ENCODE measurements at regions of chr19 and their contacts with region 1.

Region 1: GRCh38 chr19:41859618-41860418 is at the start of gene RPS19:
- DNase-seq: peak; percentile 99
- total RNA-seq, gene RPS19: 548 TPM

Region 2: DNA sequence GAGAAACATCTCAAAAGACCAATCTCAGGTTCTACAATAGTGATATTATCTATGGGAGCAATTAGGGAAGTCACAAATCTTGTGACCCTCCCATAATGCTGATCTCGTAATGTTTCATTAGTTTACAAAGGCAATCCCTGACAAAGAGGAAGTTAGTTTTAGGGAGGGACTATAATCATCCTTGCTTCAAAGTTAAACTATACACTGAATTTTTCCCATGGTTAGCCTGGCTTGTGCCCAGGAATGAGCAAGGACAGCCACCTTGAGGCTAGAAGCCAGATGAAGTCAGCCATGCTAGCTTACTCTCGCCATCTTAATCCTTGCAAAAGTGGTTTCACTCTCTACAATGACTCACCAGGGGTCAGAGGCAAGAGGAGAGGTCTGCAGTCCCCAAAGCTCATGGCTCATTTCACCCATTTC is 58.0 kb before region 1 on chr19:
- intact Hi-C with region 1: no loop called
- DNase-seq: no peak

Region 3: GRCh38 chr19:41883821-41884733 is 24.3 kb after region 1 on chr19:
- intact Hi-C with region 1: loop called (anchors 2 kb)
- DNase-seq: peak; percentile 96

Region 4: DNA sequence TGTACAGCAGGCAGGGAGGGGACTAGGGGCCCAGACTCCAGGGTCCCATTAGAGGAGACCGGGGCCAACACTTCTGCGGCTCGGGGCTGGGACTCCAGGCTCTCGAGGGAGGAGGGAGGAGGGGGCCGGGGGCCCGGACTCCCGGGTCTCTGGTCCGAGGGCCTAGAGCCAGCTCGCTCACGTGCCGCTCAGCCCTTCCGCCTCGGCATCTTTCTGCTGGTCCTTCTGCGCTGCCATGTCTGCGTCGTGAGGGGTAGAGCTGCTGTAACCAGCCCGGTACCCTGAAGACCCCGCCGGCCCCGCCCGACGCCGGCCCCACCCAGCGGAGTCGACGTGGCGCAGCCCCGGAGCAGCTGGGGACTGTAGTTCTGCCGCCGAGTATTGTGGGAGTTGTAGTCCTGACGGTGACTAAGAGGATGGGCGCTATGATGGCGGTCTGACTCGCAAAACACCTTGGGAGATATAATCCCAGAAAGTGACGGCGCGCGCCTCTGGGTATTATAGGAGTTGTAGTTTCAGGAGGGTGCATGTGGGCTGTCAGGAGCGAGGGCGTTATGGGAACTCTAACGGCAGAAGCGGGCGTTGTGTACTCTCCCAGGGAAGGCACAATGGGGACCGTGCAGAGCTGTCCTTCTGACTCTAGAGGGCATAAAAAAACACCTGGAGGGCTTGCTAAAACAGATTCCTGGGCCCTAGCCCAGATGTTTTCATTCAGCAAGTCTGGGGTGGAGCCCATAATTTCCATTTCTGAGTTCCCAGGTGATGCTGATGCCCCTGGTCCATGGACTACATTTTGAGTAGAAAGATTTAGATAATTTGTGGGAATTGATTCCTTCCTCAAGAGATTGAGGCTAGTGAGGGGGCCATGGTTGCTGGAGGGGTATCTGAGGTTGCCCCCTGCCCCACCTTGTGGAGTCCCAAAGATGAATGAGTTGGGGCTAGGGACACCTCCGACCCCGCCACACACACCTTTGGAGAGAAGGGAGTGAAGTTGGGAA is 99.5 kb after region 1 on chr19 and contains the start of gene RABAC1:
- intact Hi-C with region 1: loop called (anchors 5 kb)
- DNase-seq: peak; percentile 96
- total RNA-seq, gene RABAC1: 92.0 TPM

Measured in cardiac septum (tissue), 1 donor.